ENCODE measurements at regions of chr5 and their contacts with region 1.

Region 1: GRCh38 chr5:72955768-72956323 is at the start of gene FCHO2:
- DNase-seq: peak; percentile 98
- H3K4me3 Mint-ChIP-seq: peak within 1 kb of the TSS; percentile 86
- H3K27ac Mint-ChIP-seq: peak within 1 kb of the TSS; percentile 99
- H3K4me1 Mint-ChIP-seq: peaks cover 44% of the 10 kb centered on the region
- H3K27me3 Mint-ChIP-seq: no peaks in the 10 kb centered on the region
- CTCF ChIP-seq: peak; percentile 48
- total RNA-seq, gene FCHO2: 16.9 and 26.3 TPM in 2 replicates

Region 2: DNA sequence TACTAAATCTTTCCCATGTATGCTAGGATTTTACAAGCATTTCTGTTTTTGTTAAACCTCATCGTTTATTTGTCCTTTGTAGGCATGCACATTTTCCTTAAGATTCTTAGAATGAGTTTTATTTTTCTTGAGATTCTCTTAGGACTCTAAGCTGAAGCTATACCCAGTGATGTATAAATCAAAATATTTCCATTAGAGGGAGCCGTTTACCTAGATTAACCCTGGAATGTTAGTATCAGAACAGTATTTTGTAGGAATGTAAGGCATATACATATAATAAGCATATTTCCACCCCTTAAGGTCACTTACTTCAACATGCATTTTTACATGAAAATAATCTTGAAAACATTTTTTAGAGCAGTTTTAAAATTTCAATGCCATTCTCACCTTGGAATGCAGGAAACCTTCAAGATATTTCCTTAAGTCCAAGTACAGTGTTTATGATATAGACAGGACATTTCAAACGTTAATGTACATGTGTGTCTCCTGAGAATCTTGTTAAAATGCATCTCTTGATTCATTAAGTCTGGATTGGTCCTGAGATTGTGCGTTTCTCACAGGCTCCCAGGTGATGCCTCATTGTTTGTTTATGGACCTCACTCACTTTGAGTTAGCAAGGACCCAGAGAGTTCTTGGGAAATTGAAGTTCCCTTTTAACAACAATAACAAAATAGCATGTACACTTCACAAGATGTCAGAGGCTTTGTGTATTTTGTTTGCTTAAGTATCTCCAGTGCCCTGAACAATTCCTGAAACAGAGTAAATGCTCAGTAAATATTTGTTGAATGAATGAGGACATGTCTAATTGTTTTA is 35.0 kb before region 1 on chr5:
- CTCF ChIA-PET with region 1: interaction called, 6 read pairs
- POLR2A ChIA-PET with region 1: interaction called, 18 read pairs
- intact Hi-C with region 1: loop called (anchors 1 kb)
- DNase-seq: peak; percentile 45
- H3K4me3 Mint-ChIP-seq: no peak overlapping the region
- H3K27ac Mint-ChIP-seq: no peak overlapping the region
- H3K4me1 Mint-ChIP-seq: no peaks in the 10 kb centered on the region
- H3K27me3 Mint-ChIP-seq: no peaks in the 10 kb centered on the region
- CTCF ChIP-seq: peak; percentile 38

Region 3: GRCh38 chr5:73031839-73032238 is 76.0 kb after region 1 on chr5:
- CTCF ChIA-PET with region 1: interaction called, 4 read pairs
- POLR2A ChIA-PET with region 1: interaction called, 48 read pairs
- intact Hi-C with region 1: loop called (anchors 2 kb)
- DNase-seq: peak; percentile 78
- H3K4me3 Mint-ChIP-seq: no peak overlapping the region
- H3K27ac Mint-ChIP-seq: peak overlapping the region; percentile 51
- H3K4me1 Mint-ChIP-seq: peaks cover 16% of the 10 kb centered on the region
- H3K27me3 Mint-ChIP-seq: no peaks in the 10 kb centered on the region
- CTCF ChIP-seq: no peak

Region 4: GRCh38 chr5:73448463-73449136 is 492.8 kb after region 1 on chr5 and contains the start of gene FOXD1:
- CTCF ChIA-PET with region 1: interaction called, 3 read pairs
- POLR2A ChIA-PET with region 1: interaction called, 10 read pairs
- intact Hi-C with region 1: loop called (anchors 10 kb)
- DNase-seq: peak; percentile 91
- H3K4me3 Mint-ChIP-seq: peak within 1 kb of the TSS; percentile 85
- H3K27ac Mint-ChIP-seq: peak within 1 kb of the TSS; percentile 87
- H3K4me1 Mint-ChIP-seq: peaks cover 11% of the 10 kb centered on the region
- H3K27me3 Mint-ChIP-seq: no peaks in the 10 kb centered on the region
- CTCF ChIP-seq: no peak
- total RNA-seq, gene FOXD1: 46.4 and 50.9 TPM in 2 replicates

Region 5: DNA sequence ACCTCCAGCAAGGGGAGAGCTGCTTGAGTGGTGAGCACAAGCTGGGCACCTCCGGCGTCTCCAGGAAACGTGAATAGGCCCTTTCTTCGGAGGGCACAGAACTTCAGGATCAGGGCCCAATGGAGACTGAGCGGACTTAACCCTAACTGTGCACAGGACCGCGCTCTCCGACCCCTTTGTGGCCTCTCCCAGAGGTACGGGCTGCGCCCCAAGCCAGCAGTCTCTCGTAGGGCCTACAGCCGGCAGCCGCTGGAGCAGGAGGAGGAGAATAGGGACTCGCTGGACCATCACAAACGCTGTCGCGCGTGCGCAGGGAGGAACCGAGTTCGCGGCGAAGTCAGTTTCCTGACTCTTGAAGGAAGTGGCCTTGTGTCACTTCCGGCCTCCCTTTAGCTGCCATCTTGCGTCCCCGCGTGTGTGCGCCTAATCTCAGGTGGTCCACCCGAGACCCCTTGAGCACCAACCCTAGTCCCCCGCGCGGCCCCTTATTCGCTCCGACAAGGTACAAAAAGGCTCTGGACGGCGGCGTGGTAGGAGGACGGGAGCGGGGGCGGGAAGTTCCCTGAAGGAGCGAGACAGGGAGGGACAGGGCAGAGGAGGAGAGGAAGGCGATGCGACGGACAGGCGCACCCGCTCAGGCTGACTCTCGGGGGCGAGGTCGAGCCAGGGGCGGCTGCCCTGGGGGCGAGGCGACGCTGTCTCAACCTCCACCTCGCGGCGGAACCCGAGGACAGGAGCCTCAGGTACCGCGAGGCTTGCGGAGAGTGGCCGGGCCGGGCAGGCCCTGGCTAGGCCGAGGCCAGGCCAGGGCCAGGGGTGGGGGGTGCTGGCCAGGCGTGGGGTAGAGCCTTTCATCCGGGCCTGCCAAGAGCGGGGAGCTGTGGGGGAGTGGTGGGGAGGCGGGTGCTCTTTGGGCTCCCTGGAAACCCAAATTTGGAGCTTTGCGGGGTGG is 542.5 kb after region 1 on chr5 and contains the start of gene BTF3:
- CTCF ChIA-PET with region 1: no interaction called
- POLR2A ChIA-PET with region 1: interaction called, 40 read pairs
- intact Hi-C with region 1: no loop called
- DNase-seq: peak; percentile 97
- H3K4me3 Mint-ChIP-seq: peak within 1 kb of the TSS; percentile 94
- H3K27ac Mint-ChIP-seq: peak within 1 kb of the TSS; percentile 98
- H3K4me1 Mint-ChIP-seq: peaks cover 15% of the 10 kb centered on the region
- H3K27me3 Mint-ChIP-seq: no peaks in the 10 kb centered on the region
- CTCF ChIP-seq: no peak
- total RNA-seq, gene BTF3: 937 and 946 TPM in 2 replicates